ENCODE measurements at regions of chr5 and their contacts with region 1.

Region 1: GRCh38 chr5:43484106-43484849 is 613 bp upstream of the TMEM267 start:
- DNase-seq: peak; percentile 92
- H3K4me3 Mint-ChIP-seq: peak overlapping the region; percentile 97
- H3K27ac Mint-ChIP-seq: peak overlapping the region; percentile 99
- H3K4me1 Mint-ChIP-seq: peaks cover 45% of the 10 kb centered on the region
- H3K27me3 Mint-ChIP-seq: no peaks in the 10 kb centered on the region

Region 2: GRCh38 chr5:41869739-41870626 is 1614.3 kb before region 1 on chr5 and contains the start of gene OXCT1:
- CTCF ChIA-PET with region 1: no interaction called
- intact Hi-C with region 1: loop called (anchors 10 kb)
- DNase-seq: peak; percentile 93
- H3K4me3 Mint-ChIP-seq: peak within 1 kb of the TSS; percentile 92
- H3K27ac Mint-ChIP-seq: peak within 1 kb of the TSS; percentile 88
- H3K4me1 Mint-ChIP-seq: peaks cover 53% of the 10 kb centered on the region
- H3K27me3 Mint-ChIP-seq: no peaks in the 10 kb centered on the region
- total RNA-seq, gene OXCT1: 76.1 to 78.8 TPM

Region 3: GRCh38 chr5:42994246-42995151 is 489.8 kb before region 1 on chr5:
- CTCF ChIA-PET with region 1: interaction called, 3 read pairs
- intact Hi-C with region 1: loop called (anchors 2 kb)
- DNase-seq: peak; percentile 94
- H3K4me3 Mint-ChIP-seq: peak overlapping the region; percentile 99
- H3K27ac Mint-ChIP-seq: peak overlapping the region; percentile 100
- H3K4me1 Mint-ChIP-seq: peaks cover 17% of the 10 kb centered on the region
- H3K27me3 Mint-ChIP-seq: no peaks in the 10 kb centered on the region

Region 4: DNA sequence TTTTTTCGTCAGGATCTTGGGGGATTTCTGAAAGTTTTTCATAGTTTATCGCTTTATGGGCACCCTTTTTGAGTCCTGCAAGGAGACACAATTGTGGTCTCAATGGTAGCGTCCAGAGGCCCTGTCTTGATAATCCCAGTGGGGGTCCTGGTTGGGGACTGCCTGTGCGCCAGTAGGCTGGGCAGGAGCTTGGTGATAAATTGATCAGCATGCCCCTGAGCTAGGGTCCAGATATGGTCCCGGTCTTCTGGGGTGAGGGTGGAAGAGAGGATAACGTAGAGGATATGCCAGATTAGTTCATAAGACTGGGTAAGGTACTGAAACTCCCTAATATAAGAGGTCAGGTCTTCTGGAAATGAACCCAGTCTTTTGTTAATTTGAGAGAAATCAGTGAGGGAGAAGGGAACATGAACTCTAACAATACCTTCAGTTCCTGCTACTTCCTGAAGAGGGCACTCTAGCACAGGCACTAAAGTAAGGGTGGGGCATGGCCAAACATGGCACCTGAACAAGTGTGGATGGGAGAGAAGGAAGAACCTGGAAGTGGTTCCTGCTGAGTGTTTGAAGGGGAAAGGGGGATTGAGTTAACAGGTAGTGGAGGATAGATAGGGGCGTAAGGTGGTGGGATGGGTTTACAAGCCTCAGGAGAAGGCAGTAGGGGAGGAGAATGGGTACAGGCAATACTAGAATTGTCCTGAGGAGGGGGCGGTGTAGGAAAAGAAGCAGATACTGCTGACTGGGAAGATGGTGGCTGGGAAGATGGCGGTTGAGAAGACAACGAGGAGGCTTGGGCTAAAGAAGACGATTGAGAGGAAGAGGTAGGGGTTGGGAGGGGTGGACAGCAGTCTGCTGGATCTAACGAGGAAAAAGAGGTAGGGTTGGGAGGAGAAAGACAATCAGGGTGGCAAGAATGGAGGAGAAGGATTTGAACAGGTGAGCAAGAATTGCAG is 410.4 kb before region 1 on chr5:
- CTCF ChIA-PET with region 1: interaction called, 7 read pairs
- intact Hi-C with region 1: loop called (anchors 1 kb)
- DNase-seq: peak; percentile 70
- H3K4me3 Mint-ChIP-seq: no peak overlapping the region
- H3K27ac Mint-ChIP-seq: peak overlapping the region; percentile 43
- H3K4me1 Mint-ChIP-seq: peaks cover 39% of the 10 kb centered on the region
- H3K27me3 Mint-ChIP-seq: no peaks in the 10 kb centered on the region

Region 5: GRCh38 chr5:43191740-43192557 is 292.3 kb before region 1 on chr5 and contains the start of gene NIM1K:
- CTCF ChIA-PET with region 1: interaction called, 4 read pairs
- intact Hi-C with region 1: loop called (anchors 1 kb)
- DNase-seq: peak; percentile 60
- H3K4me3 Mint-ChIP-seq: peak within 1 kb of the TSS; percentile 72
- H3K27ac Mint-ChIP-seq: no peak within 1 kb of the TSS
- H3K4me1 Mint-ChIP-seq: peaks cover 31% of the 10 kb centered on the region
- H3K27me3 Mint-ChIP-seq: peaks cover 20% of the 10 kb centered on the region
- total RNA-seq, gene NIM1K: 0.54 to 0.57 TPM

Region 6: GRCh38 chr5:43514816-43515677 is 30.8 kb after region 1 on chr5 and contains the start of gene C5orf34:
- CTCF ChIA-PET with region 1: interaction called, 9 read pairs
- intact Hi-C with region 1: loop called (anchors 1 kb)
- DNase-seq: peak; percentile 98
- H3K4me3 Mint-ChIP-seq: peak within 1 kb of the TSS; percentile 94
- H3K27ac Mint-ChIP-seq: peak within 1 kb of the TSS; percentile 99
- H3K4me1 Mint-ChIP-seq: peaks cover 25% of the 10 kb centered on the region
- H3K27me3 Mint-ChIP-seq: no peaks in the 10 kb centered on the region
- total RNA-seq, gene C5orf34: 14.7 to 16.3 TPM

Region 7: DNA sequence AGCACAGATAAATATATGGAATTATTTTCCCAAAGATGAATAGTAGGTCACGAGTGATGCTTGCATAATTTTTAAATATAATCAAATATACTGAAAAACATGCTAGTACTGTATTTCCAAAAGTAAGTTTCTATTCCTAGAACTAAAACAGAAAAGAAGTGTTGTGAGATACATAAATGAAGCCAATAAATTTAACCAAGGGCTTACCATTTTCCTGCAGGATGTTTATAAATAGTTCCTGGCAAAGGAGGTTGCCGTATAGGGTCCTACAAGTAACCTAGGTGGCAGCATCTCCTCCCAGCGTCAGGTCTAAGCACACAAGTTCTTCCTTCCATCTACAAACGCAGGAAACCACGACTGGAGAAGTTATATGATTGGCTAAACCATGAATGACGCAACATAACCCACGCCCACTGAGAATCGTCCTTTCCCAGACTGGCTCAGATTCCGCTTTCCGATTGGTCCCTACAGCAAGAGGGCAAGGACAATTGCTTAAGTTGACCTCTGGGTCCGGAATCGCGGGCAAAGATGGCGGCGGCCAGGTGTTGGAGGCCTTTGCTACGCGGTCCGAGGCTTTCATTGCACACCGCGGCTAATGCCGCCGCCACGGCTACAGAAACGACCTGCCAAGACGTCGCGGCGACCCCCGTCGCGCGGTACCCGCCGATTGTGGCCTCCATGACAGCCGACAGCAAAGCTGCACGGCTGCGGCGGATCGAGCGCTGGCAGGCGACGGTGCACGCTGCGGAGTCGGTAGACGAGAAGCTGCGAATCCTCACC is 1324.3 kb after region 1 on chr5 and contains the start of gene MRPS30:
- CTCF ChIA-PET with region 1: no interaction called
- intact Hi-C with region 1: loop called (anchors 5 kb)
- DNase-seq: peak; percentile 96
- H3K4me3 Mint-ChIP-seq: peak within 1 kb of the TSS; percentile 96
- H3K27ac Mint-ChIP-seq: peak within 1 kb of the TSS; percentile 95
- H3K4me1 Mint-ChIP-seq: peaks cover 16% of the 10 kb centered on the region
- H3K27me3 Mint-ChIP-seq: peaks cover 1% of the 10 kb centered on the region
- total RNA-seq, gene MRPS30: 46.1 to 49.3 TPM

Measured in activated naive CD4-positive, alpha-beta T cell treated with anti-CD3 and anti-CD28 coated beads for 36 hours (primary cell).